Heart right ventricle (tissue), 16 donors: ENCODE measurements at regions of chr7 and their contacts with region 1.

Region 1: DNA sequence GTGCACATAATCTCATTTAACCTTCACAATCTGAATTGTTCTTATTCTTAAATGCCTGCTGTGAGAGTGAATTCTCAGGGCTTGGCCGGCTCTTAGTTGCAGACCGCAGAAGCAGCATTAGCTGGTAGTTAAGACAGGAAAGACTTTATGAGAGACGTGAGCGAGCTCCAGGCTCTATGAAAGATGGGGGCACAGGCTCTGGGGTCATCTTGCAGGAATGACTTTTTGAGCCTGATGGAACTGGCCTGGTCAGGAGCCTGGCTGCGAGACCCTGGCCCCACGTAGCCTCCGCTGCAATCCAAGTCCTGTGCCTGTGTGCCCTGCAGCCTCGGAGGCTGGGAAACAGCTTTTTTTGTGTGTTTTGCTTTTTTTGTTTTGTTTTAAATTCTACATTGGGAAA is 958.8 kb upstream of the ZNF722 start:
- DNase-seq: no peak
- ATAC-seq: no peak
- H3K4me3 ChIP-seq: no peak overlapping the region
- H3K27ac ChIP-seq: no peak overlapping the region
- H3K4me1 ChIP-seq: no peaks in the 10 kb centered on the region
- H3K27me3 ChIP-seq: no peaks in the 10 kb centered on the region
- CTCF ChIP-seq: no peak

Region 2: DNA sequence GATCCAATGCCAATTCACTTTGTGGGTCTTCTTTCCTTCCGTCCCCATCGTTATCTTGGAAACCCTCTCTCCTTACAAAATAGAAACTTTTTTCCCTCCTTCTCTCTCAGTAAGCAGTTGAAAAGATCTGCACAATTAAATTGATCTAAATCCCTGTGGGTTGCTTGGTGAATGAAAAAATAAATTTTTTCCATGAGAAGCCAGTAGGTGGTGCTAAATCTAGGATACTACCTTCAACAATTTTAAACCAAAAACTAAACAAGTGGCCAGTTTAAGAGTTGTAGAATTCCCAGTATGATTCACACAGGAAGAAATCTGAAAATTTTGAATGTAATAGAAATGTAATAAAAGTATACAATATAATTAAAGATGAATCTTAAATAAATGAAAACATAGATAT is 31.5 kb before region 1 on chr7:
- intact Hi-C with region 1: no loop called
- DNase-seq: no peak
- ATAC-seq: no peak
- H3K4me3 ChIP-seq: no peak overlapping the region
- H3K27ac ChIP-seq: no peak overlapping the region
- H3K4me1 ChIP-seq: no peaks in the 10 kb centered on the region
- H3K27me3 ChIP-seq: no peaks in the 10 kb centered on the region
- CTCF ChIP-seq: peak in 3 of 9 donors; percentile 26 to 32 (median 31)

Region 3: DNA sequence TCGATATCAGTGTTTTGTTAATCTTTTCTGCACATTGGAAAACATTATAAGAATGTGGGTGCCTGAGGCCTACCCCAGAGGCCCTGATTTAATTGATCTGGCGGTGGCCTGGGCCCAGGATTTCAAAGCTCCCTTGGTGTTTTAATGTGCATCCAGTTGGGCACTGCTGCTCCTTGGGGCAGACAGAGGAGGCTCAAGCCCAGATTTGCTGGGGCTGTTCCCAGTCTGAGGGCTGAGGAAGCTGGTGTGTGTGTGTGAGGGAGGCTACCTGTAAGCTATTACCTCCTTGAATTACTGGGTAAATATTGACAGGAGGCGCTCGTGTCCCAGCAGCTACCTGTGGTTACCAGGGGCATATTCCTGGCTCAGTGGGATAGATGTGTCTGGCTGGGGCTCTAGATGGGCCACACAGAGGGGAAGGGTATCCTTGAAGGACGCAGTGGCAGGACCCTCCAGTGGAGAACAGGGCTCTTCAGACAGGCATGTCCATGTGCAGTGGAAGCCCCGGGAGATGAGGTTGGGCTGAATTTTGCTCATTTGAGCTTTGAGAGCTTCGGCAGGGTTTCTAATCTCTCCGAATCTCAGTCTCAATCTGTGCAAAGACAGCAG is 16.6 kb before region 1 on chr7:
- intact Hi-C with region 1: loop called in 1 of 10 experiments (anchors 2 kb)
- DNase-seq: no peak
- ATAC-seq: no peak
- H3K4me3 ChIP-seq: no peak overlapping the region
- H3K27ac ChIP-seq: no peak overlapping the region
- H3K4me1 ChIP-seq: no peaks in the 10 kb centered on the region
- H3K27me3 ChIP-seq: no peaks in the 10 kb centered on the region
- CTCF ChIP-seq: no peak

Region 4: DNA sequence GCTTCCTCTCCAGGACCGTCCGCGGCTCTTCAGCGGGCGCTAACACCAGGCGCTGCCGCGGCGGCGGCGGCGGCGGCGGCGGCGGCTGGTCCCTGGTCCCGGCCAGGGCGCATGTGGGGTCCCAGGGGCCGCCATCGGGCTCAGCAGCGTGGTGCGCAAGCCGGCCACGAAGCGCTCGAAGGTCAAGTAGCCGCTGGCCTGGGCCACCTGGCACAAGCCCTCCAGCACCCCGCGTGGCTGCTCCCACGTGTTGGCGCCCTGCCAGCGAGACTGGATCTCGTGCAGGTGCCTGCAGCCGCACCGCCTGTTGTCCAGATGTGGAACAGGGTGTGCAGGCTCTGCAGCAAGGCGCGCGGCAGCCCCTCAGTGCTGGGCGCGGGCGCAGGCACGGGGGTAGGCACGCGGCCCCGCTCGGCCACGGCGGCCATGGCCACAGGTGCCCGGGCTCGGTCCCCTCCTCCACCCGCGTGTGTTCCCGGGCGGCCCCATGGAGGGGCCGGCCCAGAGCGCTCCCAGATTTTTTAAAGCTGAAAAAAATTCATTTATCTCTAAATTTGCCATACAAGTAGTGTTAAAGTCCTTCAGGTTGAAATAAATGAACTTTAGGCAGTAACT is 74.6 kb after region 1 on chr7:
- intact Hi-C with region 1: no loop called
- DNase-seq: no peak
- ATAC-seq: no peak
- H3K4me3 ChIP-seq: no peak overlapping the region
- H3K27ac ChIP-seq: no peak overlapping the region
- H3K4me1 ChIP-seq: no peaks in the 10 kb centered on the region
- H3K27me3 ChIP-seq: no peaks in the 10 kb centered on the region
- CTCF ChIP-seq: no peak